Gastrocnemius medialis (tissue), 4 donors: ENCODE measurements at regions of chr6 and their contacts with region 1.

Region 1: DNA sequence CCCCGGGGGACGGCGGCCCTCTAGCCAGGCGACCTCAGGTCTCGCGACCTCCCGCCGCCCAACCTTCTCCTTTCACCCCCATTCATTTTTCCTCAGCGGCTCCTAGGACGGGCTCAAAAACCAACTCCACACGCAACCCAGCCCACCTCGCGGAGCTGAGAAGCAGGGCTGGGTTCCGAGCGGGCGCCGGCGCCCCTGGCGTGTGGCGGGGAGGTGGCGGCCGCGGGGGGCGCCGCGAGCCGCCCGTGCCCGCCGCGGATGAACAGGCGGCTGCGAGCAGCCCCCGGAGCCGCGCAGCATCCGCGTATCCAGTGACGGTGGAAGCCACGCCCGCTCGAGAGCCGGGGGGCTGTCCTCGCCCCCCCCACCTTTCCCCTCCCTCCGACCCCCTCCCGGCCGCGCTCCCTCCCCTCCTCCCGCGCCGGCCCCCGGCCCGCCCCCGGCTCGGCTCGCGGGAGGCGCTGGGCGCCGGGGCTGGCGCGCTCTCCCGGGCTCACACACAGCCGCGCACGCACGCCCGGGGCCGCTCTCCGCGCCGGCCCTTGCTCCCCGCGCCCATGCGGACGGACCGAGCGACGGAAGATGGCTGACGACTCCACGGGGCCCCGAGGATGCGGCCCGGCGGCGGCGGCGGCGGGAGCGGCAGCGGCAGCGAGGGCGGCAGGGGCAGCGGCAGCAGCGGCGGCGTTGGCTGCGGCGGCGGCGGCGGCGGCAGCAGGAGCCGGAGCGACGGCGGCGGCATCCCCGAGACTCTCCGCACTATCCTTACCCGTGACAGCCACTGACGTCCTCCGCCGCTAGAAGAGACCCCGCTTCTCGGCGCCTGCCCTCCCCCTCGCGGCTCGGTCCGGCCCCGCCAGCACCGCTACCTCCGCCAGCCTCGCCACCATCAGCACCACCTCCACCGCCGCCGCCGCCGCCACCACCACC is at the start of gene SOBP:
- DNase-seq: peak; percentile 47 to 52
- ATAC-seq: peak; percentile 16 to 21
- H3K4me3 ChIP-seq: peak within 1 kb of the TSS; percentile 69 to 94 (median 84)
- H3K27ac ChIP-seq: peak within 1 kb of the TSS; percentile 90 to 95 (median 92)
- H3K4me1 ChIP-seq: peaks cover 28 to 35% of the 10 kb centered on the region in 2 donors
- H3K27me3 ChIP-seq: no peaks in the 10 kb centered on the region
- CTCF ChIP-seq: peak in 3 of 5 experiments; percentile 4 to 20 (median 19)
- POLR2A ChIP-seq: peak; percentile 45 to 53
- total RNA-seq, gene SOBP: 3.8 to 32.5 (median 19.4) TPM

Region 2: GRCh38 chr6:107443608-107444267 is 46.2 kb before region 1 on chr6:
- in situ Hi-C with region 1: no loop called
- intact Hi-C with region 1: no loop called
- DNase-seq: no peak
- ATAC-seq: no peak
- H3K4me3 ChIP-seq: no peak overlapping the region
- H3K27ac ChIP-seq: no peak overlapping the region
- H3K4me1 ChIP-seq: peaks cover 5 to 13% of the 10 kb centered on the region in 2 donors
- H3K27me3 ChIP-seq: no peaks in the 10 kb centered on the region
- CTCF ChIP-seq: no peak
- POLR2A ChIP-seq: no peak

Region 3: DNA sequence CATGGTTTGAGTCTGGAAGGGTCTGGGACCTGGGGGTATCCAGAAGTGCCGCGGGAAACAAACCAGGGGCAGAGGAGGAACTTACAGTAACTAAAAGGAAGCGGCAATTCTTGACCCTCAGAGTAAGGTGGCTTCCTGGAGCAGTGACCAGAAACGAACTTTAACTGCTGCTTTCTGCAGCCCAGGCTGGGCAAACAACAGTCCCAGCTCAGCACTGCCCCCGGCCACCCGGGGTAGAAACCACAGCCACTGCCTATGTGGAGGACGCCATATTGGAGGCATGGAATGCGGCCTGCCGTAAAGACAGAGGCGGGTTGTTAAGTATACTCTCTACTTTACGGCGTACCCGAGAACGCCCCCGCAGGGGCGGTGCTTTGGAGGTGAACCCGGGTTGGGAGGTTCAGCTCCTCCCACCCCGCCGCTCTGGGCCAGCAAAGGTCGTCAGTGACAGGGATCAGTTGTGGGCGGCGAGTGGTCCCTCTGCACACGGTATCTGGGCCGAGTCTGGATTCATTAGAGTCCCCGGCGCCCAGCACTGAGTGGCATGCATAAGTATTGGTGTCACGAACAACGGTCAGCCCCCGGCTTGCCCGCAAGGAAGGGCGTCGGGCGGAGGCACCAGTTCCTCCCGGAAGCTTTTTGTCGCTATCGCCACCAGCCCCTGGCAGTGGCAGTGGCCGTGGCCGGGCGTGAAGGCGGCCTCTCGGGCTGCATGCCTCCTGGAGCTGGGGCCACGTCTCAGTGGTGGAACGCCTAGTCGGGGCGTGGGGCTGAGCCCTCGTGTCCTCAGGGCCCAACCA is 30.4 kb before region 1 on chr6 and contains the start of gene PDSS2:
- in situ Hi-C with region 1: no loop called
- intact Hi-C with region 1: loop called (anchors 1 kb)
- DNase-seq: peak; percentile 97 to 99
- ATAC-seq: peak; percentile 94 to 98
- H3K4me3 ChIP-seq: peak within 1 kb of the TSS; percentile 79 to 89 (median 82)
- H3K27ac ChIP-seq: peak within 1 kb of the TSS; percentile 92 to 98 (median 94)
- H3K4me1 ChIP-seq: peaks cover 12 to 17% of the 10 kb centered on the region in 2 donors
- H3K27me3 ChIP-seq: no peaks in the 10 kb centered on the region
- CTCF ChIP-seq: peak in 3 of 5 experiments; percentile 7 to 35 (median 8)
- POLR2A ChIP-seq: peak; percentile 81 to 90
- total RNA-seq, gene PDSS2: 6.6 to 14.3 (median 10.0) TPM

Region 4: DNA sequence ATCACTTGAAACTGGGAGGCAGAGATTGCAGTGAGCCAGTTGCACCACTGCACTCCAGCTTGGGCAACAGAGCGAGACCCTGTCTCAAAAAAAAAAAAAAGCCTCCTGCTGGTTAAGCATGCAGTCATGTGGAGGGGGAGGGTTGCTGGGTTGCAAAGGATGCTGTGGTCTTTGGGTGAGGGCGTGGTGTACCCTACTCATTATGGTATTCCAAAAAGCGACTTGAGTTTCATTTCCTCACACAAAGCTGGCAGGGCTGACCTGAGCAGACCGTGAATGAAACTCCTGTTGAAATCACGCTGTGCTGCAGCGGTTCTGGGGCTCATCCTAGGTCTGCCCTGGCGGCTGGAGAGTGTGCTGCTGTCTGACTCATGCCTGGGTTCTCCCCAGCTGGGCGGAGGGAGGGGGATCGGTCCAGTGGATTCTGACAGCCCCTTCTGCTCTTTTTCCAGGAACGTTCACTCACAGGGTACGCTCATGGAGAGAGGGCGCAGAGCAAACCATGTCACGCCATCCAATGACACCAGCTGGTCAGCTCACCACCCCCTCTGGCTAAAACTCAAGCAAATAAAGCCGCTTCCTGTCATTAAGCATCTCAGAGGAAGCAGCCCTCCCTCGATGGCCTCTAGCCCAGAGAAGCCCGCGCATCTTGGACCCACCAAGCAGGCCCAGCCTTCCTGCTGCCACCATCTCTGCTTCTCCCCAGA is 168.0 kb after region 1 on chr6:
- in situ Hi-C with region 1: loop called in 3 of 4 experiments (anchors 10 to 25 kb)
- intact Hi-C with region 1: loop called (anchors 5 kb)
- DNase-seq: peak; percentile 66 to 78
- ATAC-seq: peak; percentile 60 to 61
- H3K4me3 ChIP-seq: peak overlapping the region in 2 of 4 donors; percentile 5 to 26
- H3K27ac ChIP-seq: peak overlapping the region; percentile 58 to 87 (median 65)
- H3K4me1 ChIP-seq: peaks cover 78 to 80% of the 10 kb centered on the region in 2 donors
- H3K27me3 ChIP-seq: no peaks in the 10 kb centered on the region
- CTCF ChIP-seq: peak in 2 of 5 experiments; percentile 34 to 39
- POLR2A ChIP-seq: no peak

Region 5: DNA sequence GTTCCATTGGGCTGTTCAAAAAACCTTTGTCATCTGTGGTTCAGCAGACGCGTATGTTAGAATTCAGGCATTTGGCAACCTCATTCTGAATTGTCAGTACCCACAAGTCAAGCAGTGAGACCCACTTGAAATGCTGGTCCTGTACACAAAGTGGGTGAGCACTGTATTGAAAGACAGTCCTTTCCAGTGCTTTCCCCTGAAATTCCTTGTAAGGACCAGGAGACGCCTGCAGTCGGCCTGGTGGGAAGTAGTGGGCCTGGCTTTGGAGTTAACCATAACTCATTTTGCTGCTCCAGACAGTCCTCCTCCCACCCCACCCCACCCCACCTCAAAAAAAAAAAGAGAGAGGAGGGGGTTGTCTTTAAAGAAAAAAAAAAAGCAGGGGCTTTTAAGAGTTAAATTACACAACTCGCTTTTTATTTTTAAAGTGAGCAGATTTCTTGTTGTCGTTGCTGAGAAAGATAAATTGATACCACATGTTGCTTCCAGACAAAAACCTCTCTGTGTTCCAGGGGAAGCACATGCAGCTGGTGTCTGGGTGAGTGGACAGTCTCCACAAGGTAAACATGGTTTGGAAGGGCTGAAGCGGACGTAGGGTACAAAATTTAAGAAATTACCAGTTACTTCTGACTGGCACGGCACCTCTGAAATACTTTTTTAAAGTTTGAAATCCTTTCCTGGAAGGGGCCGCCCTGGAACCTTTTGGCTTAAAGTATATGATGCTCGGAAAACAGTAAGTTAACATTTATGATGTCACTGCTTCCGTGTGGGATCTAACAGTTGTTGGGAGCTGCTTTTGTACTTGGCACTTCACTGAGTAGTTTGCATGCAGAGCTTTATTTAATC is 1166.1 kb after region 1 on chr6:
- in situ Hi-C with region 1: no loop called
- intact Hi-C with region 1: loop called (anchors 10 kb)
- DNase-seq: peak; percentile 52 to 69
- ATAC-seq: peak; percentile 37 to 60
- H3K4me3 ChIP-seq: peak overlapping the region; percentile 50 to 67 (median 62)
- H3K27ac ChIP-seq: peak overlapping the region; percentile 89 to 94 (median 92)
- H3K4me1 ChIP-seq: peaks cover 77 to 85% of the 10 kb centered on the region in 2 donors
- H3K27me3 ChIP-seq: no peaks in the 10 kb centered on the region
- CTCF ChIP-seq: no peak
- POLR2A ChIP-seq: peak; percentile 33 to 75